Activated CD4-positive, alpha-beta T cell treated with anti-CD3 and anti-CD28 coated beads, Interleukin-2, amount 10 ng/mL, durations not matched to agents 24 days and 14 days (primary cell): ENCODE measurements at regions of chr1 and their contacts with region 1.

Region 1: GRCh38 chr1:200866521-200866920 is 6.3 kb upstream of the GPR25 start:
- DNase-seq: peak; percentile 73
- H3K4me3 Mint-ChIP-seq: no peak overlapping the region
- H3K27ac Mint-ChIP-seq: no peak overlapping the region
- H3K4me1 Mint-ChIP-seq: peaks cover 18% of the 10 kb centered on the region
- H3K27me3 Mint-ChIP-seq: peaks cover 37% of the 10 kb centered on the region

Region 2: GRCh38 chr1:200628223-200628881 is 238.2 kb before region 1 on chr1:
- intact Hi-C with region 1: loop called (anchors 5 kb)
- DNase-seq: peak; percentile 69
- H3K4me3 Mint-ChIP-seq: peak overlapping the region; percentile 58
- H3K27ac Mint-ChIP-seq: peak overlapping the region; percentile 62
- H3K4me1 Mint-ChIP-seq: peaks cover 34% of the 10 kb centered on the region
- H3K27me3 Mint-ChIP-seq: peaks cover 8% of the 10 kb centered on the region

Region 3: DNA sequence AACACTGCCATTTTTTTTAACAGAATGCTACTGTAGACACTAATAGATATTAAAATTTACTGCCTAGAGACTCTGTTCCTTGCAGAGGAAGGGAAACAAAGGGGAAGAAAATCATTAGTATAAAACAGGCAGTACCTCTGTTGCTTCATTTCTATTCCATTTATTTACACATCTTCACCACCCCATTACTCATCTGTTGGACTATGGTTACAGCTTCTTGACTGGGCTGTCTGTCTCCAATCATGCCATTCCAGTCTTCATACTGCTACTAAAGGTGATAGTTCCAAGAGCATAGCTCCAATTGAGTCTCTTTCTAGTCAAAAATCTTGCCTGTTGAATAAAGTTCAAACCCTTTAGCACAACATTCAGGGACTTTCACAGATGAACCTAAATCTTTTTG is 16.0 kb before region 1 on chr1:
- intact Hi-C with region 1: no loop called
- DNase-seq: no peak
- H3K4me3 Mint-ChIP-seq: no peak overlapping the region
- H3K27ac Mint-ChIP-seq: no peak overlapping the region
- H3K4me1 Mint-ChIP-seq: no peaks in the 10 kb centered on the region
- H3K27me3 Mint-ChIP-seq: peaks cover 28% of the 10 kb centered on the region

Region 4: GRCh38 chr1:200896531-200897196 is 30.1 kb after region 1 on chr1:
- intact Hi-C with region 1: no loop called
- DNase-seq: no peak
- H3K4me3 Mint-ChIP-seq: no peak overlapping the region
- H3K27ac Mint-ChIP-seq: no peak overlapping the region
- H3K4me1 Mint-ChIP-seq: peaks cover 3% of the 10 kb centered on the region
- H3K27me3 Mint-ChIP-seq: peaks cover 60% of the 10 kb centered on the region

Region 5: GRCh38 chr1:200907611-200908097 is 41.1 kb after region 1 on chr1:
- intact Hi-C with region 1: loop called (anchors 5 kb)
- DNase-seq: no peak
- H3K4me3 Mint-ChIP-seq: no peak overlapping the region
- H3K27ac Mint-ChIP-seq: no peak overlapping the region
- H3K4me1 Mint-ChIP-seq: peaks cover 6% of the 10 kb centered on the region
- H3K27me3 Mint-ChIP-seq: peaks cover 27% of the 10 kb centered on the region

Region 6: DNA sequence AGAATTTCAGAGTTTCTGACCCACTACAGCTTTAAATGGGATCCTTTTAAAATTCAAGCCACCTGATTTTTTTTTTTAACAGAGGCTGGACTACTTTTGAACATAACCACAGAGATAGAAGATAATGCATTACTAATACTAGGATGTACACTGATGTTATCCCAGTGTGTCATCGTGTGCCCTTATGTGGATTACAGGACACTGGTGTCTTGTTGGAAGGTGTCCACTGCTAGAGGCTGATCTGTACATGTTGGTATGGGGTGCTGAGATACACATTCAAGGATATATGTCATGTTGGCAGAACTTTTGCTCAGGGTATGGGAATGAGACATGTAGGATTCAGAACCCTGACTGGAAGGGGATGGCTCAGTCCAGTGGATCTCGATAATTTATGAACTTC is 84.5 kb after region 1 on chr1:
- intact Hi-C with region 1: no loop called
- DNase-seq: no peak
- H3K4me3 Mint-ChIP-seq: no peak overlapping the region
- H3K27ac Mint-ChIP-seq: no peak overlapping the region
- H3K4me1 Mint-ChIP-seq: no peaks in the 10 kb centered on the region
- H3K27me3 Mint-ChIP-seq: peaks cover 17% of the 10 kb centered on the region

Region 7: DNA sequence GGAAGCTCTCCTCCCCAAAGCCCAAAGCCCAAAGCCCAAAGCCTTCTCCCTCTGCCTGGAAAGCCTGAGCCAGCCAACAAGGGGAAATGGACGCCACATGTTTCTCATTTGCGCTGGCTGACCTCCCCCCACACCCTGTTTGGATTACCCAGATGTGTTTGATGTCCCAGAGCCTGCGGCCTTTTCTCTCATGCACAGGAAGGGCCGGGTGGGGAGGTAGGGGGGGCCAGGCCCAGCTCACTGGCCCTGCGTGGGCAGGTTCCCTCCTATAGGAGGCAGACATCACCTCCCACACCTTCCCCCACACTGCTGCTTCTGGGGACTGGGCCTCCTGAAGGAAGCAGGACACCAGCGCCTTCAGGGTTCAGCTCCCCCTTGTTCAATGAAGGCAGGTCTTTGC is 788.7 kb after region 1 on chr1:
- intact Hi-C with region 1: no loop called
- DNase-seq: no peak
- H3K4me3 Mint-ChIP-seq: no peak overlapping the region
- H3K27ac Mint-ChIP-seq: no peak overlapping the region
- H3K4me1 Mint-ChIP-seq: no peaks in the 10 kb centered on the region
- H3K27me3 Mint-ChIP-seq: peaks cover 23% of the 10 kb centered on the region